ENCODE measurements at regions of chr1 and their contacts with region 1.

Region 1: GRCh38 chr1:175154629-175155472 is 37.7 kb downstream of the KIAA0040 start:
- DNase-seq: peak; percentile 82
- H3K4me3 Mint-ChIP-seq: no peak overlapping the region
- H3K27ac Mint-ChIP-seq: no peak overlapping the region
- H3K4me1 Mint-ChIP-seq: peaks cover 20% of the 10 kb centered on the region
- H3K27me3 Mint-ChIP-seq: peaks cover 22% of the 10 kb centered on the region

Region 2: GRCh38 chr1:174912264-174912663 is 242.6 kb before region 1 on chr1:
- CTCF ChIA-PET with region 1: no interaction called
- POLR2A ChIA-PET with region 1: no interaction called
- intact Hi-C with region 1: no loop called
- DNase-seq: peak; percentile 69
- H3K4me3 Mint-ChIP-seq: no peak overlapping the region
- H3K27ac Mint-ChIP-seq: peak overlapping the region; percentile 33
- H3K4me1 Mint-ChIP-seq: peaks cover 59% of the 10 kb centered on the region
- H3K27me3 Mint-ChIP-seq: no peaks in the 10 kb centered on the region

Region 3: DNA sequence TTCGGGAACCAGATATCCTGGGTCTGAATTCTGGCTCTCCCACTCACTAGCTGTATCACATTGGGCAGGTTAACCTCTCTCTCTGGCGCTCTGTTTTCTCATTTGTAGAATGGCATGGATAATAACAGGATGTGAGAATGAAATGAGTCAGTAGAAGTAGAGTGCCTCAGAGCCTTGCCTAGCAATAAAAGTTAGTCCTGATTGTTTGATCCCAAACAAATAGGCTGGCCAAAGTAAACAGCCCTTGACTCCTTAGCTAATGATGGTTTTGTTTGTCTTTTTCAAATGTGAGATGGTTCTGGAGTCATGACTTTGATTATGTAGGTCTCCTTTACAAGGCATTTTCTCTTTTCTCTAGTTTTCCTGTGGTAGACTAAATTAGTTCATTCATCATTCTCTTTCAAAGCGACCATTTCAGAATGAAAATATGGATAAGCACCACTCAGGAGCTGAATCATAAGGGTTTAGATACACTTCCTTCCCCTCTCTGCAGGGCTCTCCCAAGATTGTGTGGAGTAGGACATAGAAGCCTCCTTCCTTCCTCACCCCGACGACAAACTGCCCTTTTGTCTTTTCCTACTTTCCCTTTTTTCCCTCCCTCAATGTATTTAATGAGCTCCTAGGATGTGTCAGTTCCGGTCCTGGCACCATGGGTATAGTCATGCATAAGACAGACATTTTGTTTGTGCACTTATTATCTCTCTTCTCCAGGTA is 14.6 kb after region 1 on chr1:
- CTCF ChIA-PET with region 1: interaction called, 18 read pairs
- POLR2A ChIA-PET with region 1: no interaction called
- intact Hi-C with region 1: no loop called
- DNase-seq: no peak
- H3K4me3 Mint-ChIP-seq: no peak overlapping the region
- H3K27ac Mint-ChIP-seq: peak overlapping the region; percentile 6
- H3K4me1 Mint-ChIP-seq: peaks cover 49% of the 10 kb centered on the region
- H3K27me3 Mint-ChIP-seq: no peaks in the 10 kb centered on the region

Region 4: DNA sequence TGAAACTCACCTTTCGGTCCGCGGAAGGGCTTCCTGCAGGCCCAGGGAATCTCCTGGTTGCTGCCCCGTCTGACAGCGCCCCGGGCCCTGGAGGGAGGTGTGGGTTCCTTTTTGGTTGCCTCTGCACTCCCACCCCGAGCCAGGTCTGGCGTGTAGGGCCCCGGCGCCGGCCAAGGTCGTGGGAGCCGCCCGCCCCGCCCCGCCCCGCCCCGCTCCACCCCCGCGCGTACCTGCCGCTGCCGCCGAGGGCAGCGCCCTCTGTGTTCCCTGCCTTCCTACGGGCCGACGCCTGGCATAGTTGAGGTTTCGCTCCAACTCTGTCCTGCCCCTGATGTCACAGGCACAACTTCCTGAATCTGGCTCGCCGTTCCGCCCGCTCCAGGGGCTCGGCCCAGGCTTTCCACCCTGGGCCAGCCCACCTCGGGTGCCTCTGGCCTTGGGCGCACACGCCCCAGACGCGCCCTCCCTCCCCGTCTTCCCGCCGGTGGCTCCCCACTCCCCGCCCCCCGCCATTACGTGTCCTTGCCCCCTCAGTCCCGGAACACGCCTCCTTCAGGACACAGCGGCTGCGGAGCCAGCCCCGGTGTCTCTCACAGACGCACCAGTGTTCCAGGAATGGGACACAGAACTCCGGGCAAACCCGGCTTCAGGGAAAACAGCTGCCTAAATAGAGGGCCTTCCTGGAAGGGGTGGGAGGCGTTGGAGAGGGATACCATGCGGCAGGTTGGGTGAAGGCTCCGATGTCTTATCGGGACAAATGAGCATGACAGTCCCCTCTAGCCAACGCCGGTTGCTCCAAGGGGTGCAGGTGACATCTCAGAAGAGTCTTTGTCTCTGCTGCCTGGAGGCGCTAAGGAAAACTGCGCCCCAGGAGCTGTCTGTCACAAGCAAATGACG is 38.0 kb after region 1 on chr1 and contains the start of gene KIAA0040:
- CTCF ChIA-PET with region 1: interaction called, 43 read pairs
- POLR2A ChIA-PET with region 1: no interaction called
- intact Hi-C with region 1: loop called (anchors 1 kb)
- DNase-seq: peak; percentile 71
- H3K4me3 Mint-ChIP-seq: peak within 1 kb of the TSS; percentile 95
- H3K27ac Mint-ChIP-seq: peak within 1 kb of the TSS; percentile 93
- H3K4me1 Mint-ChIP-seq: peaks cover 48% of the 10 kb centered on the region
- H3K27me3 Mint-ChIP-seq: no peaks in the 10 kb centered on the region
- total RNA-seq, gene KIAA0040: 32.9 to 34.5 TPM

Region 5: DNA sequence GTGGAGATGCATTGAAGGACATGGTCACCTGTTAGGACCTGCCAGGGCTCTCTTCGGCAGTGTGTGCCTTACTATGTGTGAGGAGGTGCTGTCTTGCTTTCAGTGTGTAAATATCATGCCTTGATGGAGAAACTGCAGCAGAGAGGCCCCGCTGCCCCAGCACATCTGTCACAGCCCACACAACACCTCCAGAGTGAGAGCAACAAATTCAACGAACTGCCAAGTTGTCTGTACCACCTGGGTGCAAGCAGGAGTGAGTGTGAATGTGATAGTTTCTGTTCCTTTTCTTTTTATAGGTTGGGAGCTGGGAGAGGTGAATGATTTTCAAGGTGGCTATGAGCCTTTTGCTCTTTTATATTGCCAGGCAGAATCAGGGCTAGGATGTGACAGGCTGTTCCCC is 152.3 kb after region 1 on chr1:
- CTCF ChIA-PET with region 1: interaction called, 16 read pairs
- POLR2A ChIA-PET with region 1: no interaction called
- intact Hi-C with region 1: no loop called
- DNase-seq: no peak
- H3K4me3 Mint-ChIP-seq: no peak overlapping the region
- H3K27ac Mint-ChIP-seq: no peak overlapping the region
- H3K4me1 Mint-ChIP-seq: no peaks in the 10 kb centered on the region
- H3K27me3 Mint-ChIP-seq: peaks cover 5% of the 10 kb centered on the region

Region 6: GRCh38 chr1:175338387-175339135 is 183.7 kb after region 1 on chr1:
- CTCF ChIA-PET with region 1: interaction called, 60 read pairs
- POLR2A ChIA-PET with region 1: no interaction called
- intact Hi-C with region 1: no loop called
- DNase-seq: peak; percentile 73
- H3K4me3 Mint-ChIP-seq: no peak overlapping the region
- H3K27ac Mint-ChIP-seq: no peak overlapping the region
- H3K4me1 Mint-ChIP-seq: no peaks in the 10 kb centered on the region
- H3K27me3 Mint-ChIP-seq: no peaks in the 10 kb centered on the region

Region 7: GRCh38 chr1:175742790-175743459 is 588.1 kb after region 1 on chr1:
- CTCF ChIA-PET with region 1: interaction called, 11 read pairs
- POLR2A ChIA-PET with region 1: no interaction called
- intact Hi-C with region 1: no loop called
- DNase-seq: no peak
- H3K4me3 Mint-ChIP-seq: no peak overlapping the region
- H3K27ac Mint-ChIP-seq: no peak overlapping the region
- H3K4me1 Mint-ChIP-seq: peaks cover 2% of the 10 kb centered on the region
- H3K27me3 Mint-ChIP-seq: peaks cover 21% of the 10 kb centered on the region